ENCODE measurements at regions of chr1 and their contacts with region 1.

Region 1: GRCh38 chr1:161382214-161383019 is 14.7 kb upstream of the CFAP126 start:
- DNase-seq: peak; percentile 49
- CTCF ChIP-seq: peak; percentile 72

Region 2: DNA sequence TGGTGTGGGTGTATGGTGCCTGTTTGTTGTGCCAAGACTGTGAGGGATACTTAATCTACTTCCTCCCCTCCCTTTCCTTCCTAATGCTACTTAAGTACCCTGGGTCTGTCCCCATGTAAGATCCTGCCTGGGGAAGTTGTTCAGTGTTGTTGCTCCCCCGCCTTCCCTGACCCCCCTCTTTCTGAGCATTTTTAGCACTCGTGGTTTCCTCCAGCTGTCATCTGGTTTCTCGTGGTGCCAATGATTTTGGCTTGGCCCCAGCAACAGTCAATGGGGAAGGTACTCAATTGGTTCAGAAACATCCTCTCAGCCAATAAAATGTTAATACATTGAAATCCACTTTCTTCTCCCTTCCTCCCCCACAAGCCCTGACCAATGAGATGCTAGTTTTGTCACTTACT is 197.1 kb before region 1 on chr1:
- CTCF ChIA-PET with region 1: interaction called, 64 read pairs
- POLR2A ChIA-PET with region 1: no interaction called
- DNase-seq: peak; percentile 85
- CTCF ChIP-seq: no peak

Region 3: GRCh38 chr1:161201828-161202725 is 180.3 kb before region 1 on chr1 and contains the start of gene NDUFS2:
- CTCF ChIA-PET with region 1: interaction called, 117 read pairs
- POLR2A ChIA-PET with region 1: no interaction called
- DNase-seq: peak; percentile 94
- CTCF ChIP-seq: peak; percentile 10

Region 4: GRCh38 chr1:161305867-161306519 is 76.4 kb before region 1 on chr1:
- CTCF ChIA-PET with region 1: interaction called, 10 read pairs
- POLR2A ChIA-PET with region 1: no interaction called
- DNase-seq: peak; percentile 89
- CTCF ChIP-seq: peak; percentile 46

Region 5: GRCh38 chr1:161357073-161357472 is 25.3 kb before region 1 on chr1:
- CTCF ChIA-PET with region 1: interaction called, 12 read pairs
- POLR2A ChIA-PET with region 1: no interaction called
- DNase-seq: no peak
- CTCF ChIP-seq: no peak

Region 6: GRCh38 chr1:161473363-161473762 is 90.9 kb after region 1 on chr1:
- CTCF ChIA-PET with region 1: no interaction called
- POLR2A ChIA-PET with region 1: no interaction called
- DNase-seq: no peak
- CTCF ChIP-seq: no peak

Measured in GM10248 (cell line).